ENCODE measurements at regions of chr4 and their contacts with region 1.

Region 1: GRCh38 chr4:1726146-1726934 is 5.0 kb downstream of the TACC3 start:
- DNase-seq: peak; percentile 94
- ATAC-seq: peak; percentile 58

Region 2: GRCh38 chr4:1693129-1693896 is 33.0 kb before region 1 on chr4:
- intact Hi-C with region 1: loop called (anchors 5 kb)
- DNase-seq: peak; percentile 81
- ATAC-seq: peak; percentile 81

Region 3: DNA sequence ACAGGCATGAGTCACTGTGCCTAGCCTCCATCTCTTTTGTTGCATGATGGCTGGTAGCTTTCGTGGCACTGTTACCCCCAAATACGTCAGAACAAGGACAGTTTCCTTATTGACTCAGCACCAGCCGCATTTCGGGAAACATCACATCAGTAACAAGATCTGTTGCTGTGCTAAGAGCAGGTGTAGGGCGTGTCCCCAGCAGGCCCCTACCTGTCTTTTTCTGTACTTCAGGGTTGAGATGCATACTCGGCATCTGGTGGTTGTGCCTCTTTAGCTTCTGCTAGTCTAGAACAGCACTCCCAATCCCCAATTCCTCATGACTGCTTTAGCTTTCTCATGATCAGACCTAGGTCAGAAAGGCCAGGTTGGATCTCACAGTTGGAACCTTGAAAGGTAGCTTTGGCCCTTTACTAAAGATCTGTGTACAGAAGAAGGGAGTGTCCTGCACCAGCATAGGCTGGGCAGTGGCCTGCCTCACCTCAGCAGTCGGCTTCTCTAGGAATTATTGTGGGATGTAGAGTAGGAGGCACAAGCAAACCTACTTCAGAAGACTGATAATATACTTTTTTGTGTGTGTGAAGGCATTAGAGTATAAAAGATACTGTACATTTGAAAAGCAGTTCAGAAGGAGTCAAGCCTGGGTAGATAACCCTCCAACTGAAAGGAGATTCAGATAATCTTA is 181.7 kb after region 1 on chr4:
- intact Hi-C with region 1: no loop called
- DNase-seq: peak; percentile 26
- ATAC-seq: no peak

Measured in sciatic nerve (tissue), 2 donors.